ENCODE measurements at regions of chr4 and their contacts with region 1.

Region 1: GRCh38 chr4:56410235-56411062 is 23.2 kb upstream of the AASDH start:
- DNase-seq: peak; percentile 47 to 79
- ATAC-seq: peak; percentile 82 to 91
- H3K4me3 ChIP-seq: no peak overlapping the region
- H3K27ac ChIP-seq: peak overlapping the region; percentile 17 to 31; a peak in 2 of 6 replicates
- H3K4me1 ChIP-seq: peaks cover 28% of the 10 kb centered on the region
- CTCF ChIP-seq: no peak
- EP300 ChIP-seq: no peak
- POLR2A ChIP-seq: no peak
- RAD21 ChIP-seq: no peak

Region 2: DNA sequence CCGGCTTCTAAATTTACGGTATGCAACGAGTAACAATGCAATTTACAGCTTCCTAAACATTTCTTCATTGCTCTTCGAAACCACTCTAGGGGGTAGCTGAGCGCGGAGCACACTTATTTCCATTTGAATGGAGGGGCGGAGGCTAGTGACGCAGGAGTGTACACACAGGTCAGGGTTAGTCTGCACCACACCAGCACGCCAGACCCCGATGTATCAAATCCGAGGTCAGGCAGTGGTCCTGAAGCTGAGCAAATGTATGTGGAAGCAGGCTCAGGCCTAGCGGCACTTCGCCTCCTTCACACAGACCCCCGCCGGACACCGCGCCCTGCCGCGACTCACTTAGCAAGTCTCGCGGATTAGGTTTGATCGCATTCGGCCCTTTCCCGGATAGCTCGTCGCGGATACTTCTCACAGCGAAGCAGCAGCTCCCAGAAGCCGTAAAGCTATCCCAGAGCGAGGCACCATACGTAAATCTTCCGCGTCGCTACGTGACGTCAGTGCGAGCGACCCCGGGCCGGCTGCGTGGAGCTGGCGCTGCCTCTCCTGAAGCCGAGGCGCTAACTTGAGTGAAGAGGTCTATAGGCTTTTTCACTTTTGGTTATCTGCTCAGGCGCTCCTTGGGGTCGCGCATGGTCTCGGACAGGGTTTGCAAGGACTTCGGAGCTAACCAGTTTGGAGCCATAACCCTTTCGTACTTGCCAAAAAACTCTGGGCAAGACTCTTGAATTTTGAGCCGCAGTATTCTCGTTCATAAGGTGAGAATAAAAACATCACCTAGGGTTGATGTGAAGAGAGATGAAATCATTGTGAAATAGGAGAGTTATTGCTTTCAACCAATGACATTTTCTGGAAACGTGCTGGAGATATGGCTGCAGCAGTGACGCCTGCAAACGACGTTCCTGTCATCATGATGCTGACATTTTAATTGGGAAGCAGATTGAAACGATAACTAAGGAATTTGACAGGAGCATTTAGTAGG is 23.1 kb before region 1 on chr4 and contains the start of gene AASDH:
- CTCF ChIA-PET with region 1: interaction called, 3 read pairs
- POLR2A ChIA-PET with region 1: interaction called, 10 read pairs
- DNase-seq: peak; percentile 72 to 94
- ATAC-seq: peak; percentile 95 to 99
- H3K4me3 ChIP-seq: peak within 1 kb of the TSS; percentile 81
- H3K27ac ChIP-seq: peak within 1 kb of the TSS; percentile 92 to 97
- H3K4me1 ChIP-seq: peaks cover 4% of the 10 kb centered on the region; the same call in 1 of the 3 replicates
- CTCF ChIP-seq: no peak
- EP300 ChIP-seq: no peak
- POLR2A ChIP-seq: peak; percentile 71
- RAD21 ChIP-seq: no peak
- polyA plus RNA-seq, gene AASDH: 11.1 and 12.2 TPM in 2 replicates

Region 3: GRCh38 chr4:56978750-56979329 is 568.4 kb after region 1 on chr4 and contains the start of gene POLR2B:
- CTCF ChIA-PET with region 1: no interaction called
- POLR2A ChIA-PET with region 1: no interaction called
- DNase-seq: peak; percentile 74 to 95
- ATAC-seq: peak; percentile 72 to 79
- H3K4me3 ChIP-seq: peak within 1 kb of the TSS; percentile 87
- H3K27ac ChIP-seq: peak within 1 kb of the TSS; percentile 85 to 91
- H3K4me1 ChIP-seq: peaks cover 24% of the 10 kb centered on the region
- CTCF ChIP-seq: no peak
- EP300 ChIP-seq: no peak
- POLR2A ChIP-seq: peak; percentile 66
- RAD21 ChIP-seq: no peak
- polyA plus RNA-seq, gene POLR2B: 113 and 138 TPM in 2 replicates

Measured in A549 (cell line).